ENCODE measurements at regions of chr10 and their contacts with region 1.

Region 1: DNA sequence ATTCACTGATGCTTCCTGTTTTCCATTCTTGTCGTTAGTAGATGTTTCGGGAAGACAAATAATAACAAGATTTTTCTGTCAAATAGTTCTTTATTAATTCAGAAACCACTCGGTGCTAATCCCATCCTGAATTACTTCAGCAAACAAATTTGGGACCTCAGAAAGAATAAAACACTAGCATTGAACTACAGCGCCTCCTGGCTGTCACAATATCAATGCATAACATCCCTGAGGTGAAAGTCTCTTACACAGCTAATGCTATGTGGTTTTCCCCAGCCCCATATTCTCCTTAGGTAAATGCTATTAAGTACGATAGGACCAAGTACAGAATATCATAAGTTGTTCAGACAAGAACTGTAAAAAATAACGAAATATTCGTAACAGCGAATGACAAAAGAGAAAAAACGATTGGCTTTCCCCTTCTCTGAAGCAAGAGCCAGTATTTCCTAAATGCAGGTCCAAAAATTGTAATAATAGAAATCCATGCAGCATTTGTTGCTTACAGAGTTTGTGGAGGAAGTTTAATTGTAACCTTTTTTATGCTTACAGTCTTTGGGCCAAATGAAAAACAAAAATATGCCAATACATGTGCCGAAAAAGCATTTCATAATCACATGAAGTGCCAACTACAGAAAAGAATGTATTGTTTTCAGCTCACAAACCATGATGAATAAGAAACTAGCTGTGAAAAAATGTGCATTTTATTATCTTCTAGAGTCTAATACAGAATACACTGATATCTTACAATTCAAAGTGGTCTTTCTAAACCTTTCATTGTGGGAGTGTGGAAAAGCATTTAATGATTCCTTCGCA is 47.3 kb downstream of the MYPN start:
- DNase-seq: peak in 1 of 2 donors; percentile 72
- H3K4me3 ChIP-seq: no peak overlapping the region
- H3K27ac ChIP-seq: no peak overlapping the region
- H3K4me1 ChIP-seq: peaks cover 0 to 17% (median 10%) of the 10 kb centered on the region in 4 donors
- H3K27me3 ChIP-seq: no peaks in the 10 kb centered on the region
- CTCF ChIP-seq: peak; percentile 69 to 82

Region 2: DNA sequence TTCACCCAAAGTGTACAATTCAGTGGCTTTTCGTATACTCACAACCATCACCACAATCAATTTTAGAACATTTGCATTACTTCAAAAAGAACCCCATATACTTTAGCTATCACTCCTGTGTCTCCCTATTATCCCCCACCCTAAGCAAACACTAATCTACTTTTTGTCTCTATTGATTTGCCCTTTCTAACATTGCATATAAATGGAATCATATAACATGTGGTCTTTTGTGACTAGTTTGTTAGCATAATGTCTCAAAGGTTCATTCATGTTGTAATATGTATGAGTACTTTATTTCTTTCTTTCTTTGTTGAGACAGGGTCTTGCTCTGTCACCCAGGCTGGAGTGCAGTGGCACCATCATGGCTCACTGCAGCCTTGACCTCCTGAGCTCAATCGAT is 297.6 kb before region 1 on chr10:
- intact Hi-C with region 1: loop called (anchors 5 kb)
- DNase-seq: no peak
- H3K4me3 ChIP-seq: no peak overlapping the region
- H3K27ac ChIP-seq: no peak overlapping the region
- H3K4me1 ChIP-seq: no peaks in the 10 kb centered on the region
- H3K27me3 ChIP-seq: no peaks in the 10 kb centered on the region
- CTCF ChIP-seq: no peak

Region 3: DNA sequence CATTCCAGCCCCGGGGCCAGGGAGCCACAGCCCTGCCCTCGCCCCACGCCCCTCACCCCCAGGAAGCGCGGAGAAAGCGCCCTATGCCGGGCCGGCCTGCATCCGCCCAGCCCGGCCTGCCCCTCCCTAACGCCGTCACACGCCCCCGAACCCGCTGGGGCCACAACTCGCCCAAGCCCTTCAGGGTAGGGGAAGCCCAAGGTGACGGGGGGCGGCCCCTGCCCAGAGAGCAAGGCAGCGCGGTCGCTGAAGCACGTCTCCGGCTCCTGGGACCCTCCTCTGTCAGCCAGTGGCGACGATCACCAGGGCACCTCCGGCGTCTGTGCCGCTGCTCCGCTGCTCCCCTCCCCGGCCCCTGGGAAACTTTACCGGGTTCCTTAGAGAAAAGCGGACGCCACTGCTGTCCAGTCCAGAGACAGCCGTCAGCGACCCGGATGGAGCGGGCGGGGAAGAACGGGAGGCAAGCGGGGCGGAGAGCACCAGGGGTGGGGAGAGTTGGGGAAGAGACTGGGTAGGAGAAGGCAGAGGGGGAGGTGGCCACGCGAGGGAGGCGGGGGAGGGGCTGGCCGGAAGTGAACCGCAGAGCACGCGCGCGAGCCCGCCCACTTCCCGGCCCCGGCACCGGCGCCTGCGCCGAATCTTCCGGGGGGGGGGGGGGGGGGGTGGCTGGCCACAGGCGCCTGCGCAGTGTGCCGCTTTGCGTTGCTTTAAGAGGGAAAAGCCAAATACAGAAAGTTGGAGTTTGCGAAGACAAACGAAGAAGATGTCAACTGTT is 81.6 kb before region 1 on chr10 and contains the start of gene HERC4:
- intact Hi-C with region 1: no loop called
- DNase-seq: peak; percentile 95 to 98
- H3K4me3 ChIP-seq: peak within 1 kb of the TSS; percentile 72 to 99
- H3K27ac ChIP-seq: peak within 1 kb of the TSS; percentile 94 to 99
- H3K4me1 ChIP-seq: peaks cover 0 to 42% (median 15%) of the 10 kb centered on the region in 4 donors
- H3K27me3 ChIP-seq: no peaks in the 10 kb centered on the region
- CTCF ChIP-seq: no peak

Region 4: DNA sequence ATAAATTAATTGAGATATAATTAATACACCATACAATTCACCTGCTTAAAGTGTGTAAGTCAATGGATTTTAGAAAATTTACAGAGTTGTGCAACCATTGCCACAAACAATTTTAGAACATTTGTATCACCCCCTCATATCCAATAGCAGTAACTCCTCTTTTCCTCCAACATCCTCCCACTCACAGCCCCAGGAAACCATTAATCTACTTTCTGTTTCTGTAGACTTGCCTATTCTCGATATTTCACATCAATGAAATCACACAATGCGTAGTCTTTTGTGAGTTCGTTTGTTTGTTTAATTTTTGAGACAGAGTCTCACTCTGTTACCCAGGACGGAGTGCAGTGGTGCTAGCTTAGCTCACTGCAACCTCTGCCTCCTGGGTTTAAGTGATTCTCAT is 67.8 kb before region 1 on chr10:
- intact Hi-C with region 1: loop called (anchors 5 kb)
- DNase-seq: no peak
- H3K4me3 ChIP-seq: no peak overlapping the region
- H3K27ac ChIP-seq: no peak overlapping the region
- H3K4me1 ChIP-seq: peaks cover 0 to 4% (median 0%) of the 10 kb centered on the region in 4 donors
- H3K27me3 ChIP-seq: no peaks in the 10 kb centered on the region
- CTCF ChIP-seq: no peak

Region 5: DNA sequence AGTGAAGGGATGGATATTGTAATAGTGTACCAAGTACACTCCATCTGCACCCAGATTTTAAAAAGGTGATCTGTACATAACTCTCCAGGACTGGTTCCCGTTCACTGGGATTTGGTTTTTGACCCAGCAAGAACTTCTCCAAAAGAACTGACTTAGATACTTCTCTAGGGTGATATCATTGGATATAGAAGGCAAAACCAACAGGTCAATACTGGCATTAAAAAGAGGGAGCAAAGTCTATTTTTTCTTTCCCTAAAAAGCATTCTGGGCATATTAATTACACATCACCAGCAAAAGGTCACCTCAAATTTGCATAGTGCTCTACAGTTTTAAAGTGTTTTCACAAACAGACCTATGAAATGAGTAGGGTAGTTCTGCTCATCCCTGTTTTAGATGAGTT is 43.7 kb before region 1 on chr10:
- intact Hi-C with region 1: loop called (anchors 2 kb)
- DNase-seq: no peak
- H3K4me3 ChIP-seq: no peak overlapping the region
- H3K27ac ChIP-seq: no peak overlapping the region
- H3K4me1 ChIP-seq: no peaks in the 10 kb centered on the region
- H3K27me3 ChIP-seq: no peaks in the 10 kb centered on the region
- CTCF ChIP-seq: no peak

Region 6: GRCh38 chr10:68576118-68576517 is 419.5 kb after region 1 on chr10:
- intact Hi-C with region 1: no loop called
- DNase-seq: no peak
- H3K4me3 ChIP-seq: no peak overlapping the region
- H3K27ac ChIP-seq: no peak overlapping the region
- H3K4me1 ChIP-seq: no peaks in the 10 kb centered on the region
- H3K27me3 ChIP-seq: no peaks in the 10 kb centered on the region
- CTCF ChIP-seq: no peak